ENCODE measurements at regions of chr3 and their contacts with region 1.

Region 1: GRCh38 chr3:52444860-52445793 is at the start of gene SEMA3G:
- DNase-seq: peak; percentile 88
- total RNA-seq, gene SEMA3G: 15.3 TPM

Region 2: DNA sequence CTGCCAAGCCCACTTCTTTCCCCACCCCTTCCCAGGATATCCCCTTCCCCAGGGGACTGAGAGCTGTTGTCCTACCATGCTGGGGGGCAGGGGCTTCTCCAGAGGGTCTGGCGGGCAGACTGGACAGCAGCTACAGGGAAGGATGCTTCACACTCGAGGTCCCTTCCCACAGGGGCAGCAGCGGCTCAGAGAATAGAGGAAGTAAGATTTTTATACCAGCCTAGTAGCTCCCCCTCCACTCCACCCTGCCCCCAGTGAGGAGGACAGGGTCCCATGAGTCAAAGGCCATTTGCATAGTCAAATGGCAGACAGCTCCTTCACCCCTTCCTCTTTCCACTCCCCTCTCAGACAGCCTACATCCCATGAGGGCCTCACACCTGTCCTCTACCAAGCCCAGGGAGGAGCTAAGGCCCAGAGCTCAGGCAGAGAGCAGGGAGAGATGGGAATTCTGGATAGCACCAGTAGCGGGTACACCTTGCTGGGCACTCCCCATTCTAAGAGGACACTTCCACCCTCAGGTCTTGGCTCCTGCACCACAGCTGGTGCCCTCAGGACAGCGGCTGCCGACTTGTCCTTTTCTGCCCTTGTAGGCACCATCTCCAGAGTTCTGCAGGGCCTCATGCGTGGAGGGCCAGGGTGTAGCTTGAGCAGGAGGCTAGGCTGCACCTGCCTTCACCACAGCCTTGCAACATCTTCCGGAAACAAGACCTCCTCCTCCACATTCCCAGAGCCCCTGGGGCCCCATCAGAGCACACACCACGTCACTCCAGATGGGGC is 219.5 kb before region 1 on chr3 and contains the start of gene TLR9:
- intact Hi-C with region 1: loop called (anchors 5 kb)
- DNase-seq: peak; percentile 73
- total RNA-seq, gene TLR9: 0.16 TPM

Region 3: GRCh38 chr3:52428151-52429005 is 16.7 kb before region 1 on chr3:
- intact Hi-C with region 1: loop called (anchors 1 kb)
- DNase-seq: peak; percentile 68

Region 4: DNA sequence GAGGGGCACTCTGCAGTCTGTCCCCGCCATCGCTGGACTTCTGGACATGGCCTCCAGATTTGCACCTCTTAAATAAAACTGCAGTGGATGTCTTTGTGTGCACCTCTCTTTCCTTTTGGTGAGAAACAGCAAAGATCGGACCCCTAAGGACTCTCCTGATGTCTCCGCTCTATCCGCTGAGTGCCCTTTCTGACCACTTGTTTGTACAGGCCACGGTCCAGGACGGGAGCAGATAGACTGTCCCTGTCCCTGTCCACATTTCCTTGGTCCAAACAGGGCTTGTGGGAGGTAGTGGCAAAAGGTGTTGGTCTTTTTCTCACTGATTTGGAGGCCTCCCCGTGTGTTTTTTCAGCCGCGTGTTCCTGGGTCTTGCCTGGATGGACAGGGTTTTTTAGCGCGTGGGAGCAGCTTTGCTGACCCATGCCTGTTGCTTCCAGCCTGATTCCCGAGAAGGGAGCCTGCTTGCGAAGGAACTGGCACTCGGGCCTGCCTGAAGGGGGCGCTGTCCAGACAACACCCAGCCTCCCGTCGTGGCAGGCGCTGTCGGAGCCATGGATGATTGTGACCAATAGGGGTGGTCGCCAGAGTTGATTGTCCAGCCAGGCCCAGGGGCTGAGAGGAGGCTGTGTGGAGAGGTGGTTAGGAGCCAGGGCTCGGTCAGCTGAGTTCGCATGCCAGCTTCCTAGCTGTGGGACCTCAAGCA is 36.8 kb after region 1 on chr3:
- intact Hi-C with region 1: no loop called
- DNase-seq: no peak

Measured in cardiac septum (tissue), 1 donor.